ENCODE measurements at regions of chr18 and their contacts with region 1.

Region 1: DNA sequence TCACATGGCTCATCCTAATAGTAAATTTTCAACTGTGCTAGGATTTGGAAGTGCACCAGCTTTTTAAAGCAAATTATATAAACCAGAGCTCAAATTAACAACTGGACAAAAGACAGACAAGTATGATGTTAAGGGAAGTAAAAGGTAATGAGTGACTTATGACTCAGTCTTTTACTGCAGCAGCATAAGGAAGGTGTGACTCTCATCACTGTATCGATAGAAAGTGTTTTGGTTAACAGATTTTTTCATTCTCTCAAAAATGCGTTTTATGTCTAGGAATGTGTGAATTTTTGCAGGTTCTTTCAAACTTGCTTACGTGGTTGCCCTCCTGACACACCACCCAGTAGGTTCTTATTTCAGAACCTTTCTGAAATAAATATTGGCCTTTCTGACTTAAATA is 244.2 kb upstream of the BOD1L2 start:
- DNase-seq: peak in 2 of 9 experiments; percentile 1 to 11
- ATAC-seq: no peak
- H3K4me3 ChIP-seq: no peak overlapping the region
- H3K4me3 Mint-ChIP-seq: no peak overlapping the region
- H3K27ac ChIP-seq: no peak overlapping the region
- H3K27ac Mint-ChIP-seq: no peak overlapping the region
- H3K4me1 ChIP-seq: no peaks in the 10 kb centered on the region
- H3K4me1 Mint-ChIP-seq: peaks cover 19% of the 10 kb centered on the region
- H3K27me3 ChIP-seq: no peaks in the 10 kb centered on the region
- H3K27me3 Mint-ChIP-seq: no peaks in the 10 kb centered on the region
- CTCF ChIP-seq: no peak

Region 2: DNA sequence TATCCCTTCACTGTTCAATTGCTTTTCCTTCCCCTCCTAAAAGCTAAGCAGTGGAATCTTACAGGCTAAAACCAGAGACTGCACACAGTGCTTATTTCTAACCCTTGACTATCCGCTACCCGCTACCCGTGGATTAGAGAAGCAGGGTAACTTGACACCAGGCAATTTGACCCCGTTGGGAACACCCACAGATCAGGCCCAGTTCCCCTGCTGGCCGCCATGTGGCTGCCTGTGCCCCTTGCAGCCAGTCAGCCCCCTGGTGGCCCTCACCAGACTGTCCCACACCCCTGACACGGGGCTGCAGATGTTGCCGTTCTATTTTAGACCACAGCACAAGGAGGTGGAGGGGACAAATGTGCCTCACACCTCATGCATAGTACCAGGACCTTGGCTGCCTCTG is 339.1 kb before region 1 on chr18:
- CTCF ChIA-PET with region 1: no interaction called
- POLR2A ChIA-PET with region 1: no interaction called
- intact Hi-C with region 1: no loop called
- DNase-seq: no peak
- ATAC-seq: no peak
- H3K4me3 ChIP-seq: no peak overlapping the region
- H3K4me3 Mint-ChIP-seq: no peak overlapping the region
- H3K27ac ChIP-seq: no peak overlapping the region
- H3K27ac Mint-ChIP-seq: no peak overlapping the region
- H3K4me1 ChIP-seq: no peaks in the 10 kb centered on the region
- H3K4me1 Mint-ChIP-seq: no peaks in the 10 kb centered on the region
- H3K27me3 ChIP-seq: no peaks in the 10 kb centered on the region
- H3K27me3 Mint-ChIP-seq: peaks cover 10% of the 10 kb centered on the region
- CTCF ChIP-seq: no peak

Region 3: GRCh38 chr18:56942196-56942595 is 39.5 kb after region 1 on chr18:
- CTCF ChIA-PET with region 1: no interaction called
- POLR2A ChIA-PET with region 1: no interaction called
- intact Hi-C with region 1: loop called in 1 of 2 experiments (anchors 1 kb)
- DNase-seq: no peak
- ATAC-seq: no peak
- H3K4me3 ChIP-seq: no peak overlapping the region
- H3K4me3 Mint-ChIP-seq: no peak overlapping the region
- H3K27ac ChIP-seq: no peak overlapping the region
- H3K27ac Mint-ChIP-seq: no peak overlapping the region
- H3K4me1 ChIP-seq: no peaks in the 10 kb centered on the region
- H3K4me1 Mint-ChIP-seq: no peaks in the 10 kb centered on the region
- H3K27me3 ChIP-seq: no peaks in the 10 kb centered on the region
- H3K27me3 Mint-ChIP-seq: no peaks in the 10 kb centered on the region
- CTCF ChIP-seq: no peak

Measured in CD8-positive, alpha-beta T cell (primary cell).